ENCODE measurements at regions of chrX and their contacts with region 1.

Region 1: GRCh38 chrX:66728818-66729271 is 90.0 kb upstream of the EDA2R start:
- DNase-seq: peak; percentile 60 to 66 (median 65)
- H3K4me3 ChIP-seq: peak overlapping the region; percentile 47 to 55
- H3K4me3 Mint-ChIP-seq: peak overlapping the region; percentile 90 to 95 (median 92)
- H3K27ac ChIP-seq: peak overlapping the region; percentile 43
- H3K27ac Mint-ChIP-seq: peak overlapping the region; percentile 89 to 99 (median 97)
- H3K4me1 ChIP-seq: no peaks in the 10 kb centered on the region
- H3K4me1 Mint-ChIP-seq: peaks cover 0 to 6% (median 2%) of the 10 kb centered on the region in 4 donors
- H3K27me3 ChIP-seq: no peaks in the 10 kb centered on the region
- H3K27me3 Mint-ChIP-seq: no peaks in the 10 kb centered on the region

Region 2: GRCh38 chrX:64894454-64895038 is 1834.3 kb before region 1 on chrX:
- CTCF ChIA-PET with region 1: no interaction called
- POLR2A ChIA-PET with region 1: no interaction called
- intact Hi-C with region 1: loop called (anchors 10 kb)
- DNase-seq: peak; percentile 21 to 33 (median 26)
- H3K4me3 ChIP-seq: no peak overlapping the region
- H3K4me3 Mint-ChIP-seq: peak overlapping the region in 1 of 8 donors; percentile 9
- H3K27ac ChIP-seq: no peak overlapping the region
- H3K27ac Mint-ChIP-seq: peak overlapping the region in 3 of 7 donors; percentile 65 to 85 (median 72)
- H3K4me1 ChIP-seq: no peaks in the 10 kb centered on the region
- H3K4me1 Mint-ChIP-seq: peaks cover 0 to 25% (median 10%) of the 10 kb centered on the region in 4 donors
- H3K27me3 ChIP-seq: no peaks in the 10 kb centered on the region
- H3K27me3 Mint-ChIP-seq: no peaks in the 10 kb centered on the region

Region 3: GRCh38 chrX:65581661-65582339 is 1147.0 kb before region 1 on chrX:
- CTCF ChIA-PET with region 1: interaction called, 32 read pairs
- POLR2A ChIA-PET with region 1: interaction called, 3 read pairs
- intact Hi-C with region 1: no loop called
- DNase-seq: peak; percentile 57 to 69 (median 66)
- H3K4me3 ChIP-seq: no peak overlapping the region
- H3K4me3 Mint-ChIP-seq: no peak overlapping the region
- H3K27ac ChIP-seq: no peak overlapping the region
- H3K27ac Mint-ChIP-seq: peak overlapping the region in 1 of 7 donors; percentile 30
- H3K4me1 ChIP-seq: no peaks in the 10 kb centered on the region
- H3K4me1 Mint-ChIP-seq: peaks cover 0 to 13% (median 5%) of the 10 kb centered on the region in 4 donors
- H3K27me3 ChIP-seq: no peaks in the 10 kb centered on the region
- H3K27me3 Mint-ChIP-seq: no peaks in the 10 kb centered on the region

Region 4: GRCh38 chrX:66030505-66031317 is 698.1 kb before region 1 on chrX:
- CTCF ChIA-PET with region 1: interaction called, 3 read pairs
- POLR2A ChIA-PET with region 1: no interaction called
- intact Hi-C with region 1: loop called (anchors 10 kb)
- DNase-seq: peak in 3 of 5 donors; percentile 11 to 36 (median 30)
- H3K4me3 ChIP-seq: no peak overlapping the region
- H3K4me3 Mint-ChIP-seq: no peak overlapping the region
- H3K27ac ChIP-seq: no peak overlapping the region
- H3K27ac Mint-ChIP-seq: no peak overlapping the region
- H3K4me1 ChIP-seq: peaks cover 8% of the 10 kb centered on the region
- H3K4me1 Mint-ChIP-seq: no peaks in the 10 kb centered on the region
- H3K27me3 ChIP-seq: no peaks in the 10 kb centered on the region
- H3K27me3 Mint-ChIP-seq: no peaks in the 10 kb centered on the region